ENCODE measurements at regions of chr17 and their contacts with region 1.

Region 1: GRCh38 chr17:9522074-9522473 is 53.5 kb downstream of the STX8 start:
- DNase-seq: peak in 1 of 2 donors; percentile 15
- ATAC-seq: peak in 1 of 2 donors; percentile 62
- H3K4me3 ChIP-seq: no peak overlapping the region
- H3K27ac ChIP-seq: no peak overlapping the region
- H3K4me1 ChIP-seq: peaks cover 0 to 16% of the 10 kb centered on the region in 2 donors
- H3K27me3 ChIP-seq: no peaks in the 10 kb centered on the region
- CTCF ChIP-seq: peak; percentile 28 to 50 (median 36)
- POLR2A ChIP-seq: no peak

Region 2: GRCh38 chr17:8991514-8992285 is 530.4 kb before region 1 on chr17:
- in situ Hi-C with region 1: loop called in 3 of 4 experiments (anchors 10 to 25 kb)
- intact Hi-C with region 1: loop called (anchors 2 kb)
- DNase-seq: peak in 1 of 2 donors; percentile 37
- ATAC-seq: peak in 1 of 2 donors; percentile 53
- H3K4me3 ChIP-seq: no peak overlapping the region
- H3K27ac ChIP-seq: no peak overlapping the region
- H3K4me1 ChIP-seq: no peaks in the 10 kb centered on the region
- H3K27me3 ChIP-seq: no peaks in the 10 kb centered on the region
- CTCF ChIP-seq: peak; percentile 41 to 67 (median 52)
- POLR2A ChIP-seq: no peak

Region 3: GRCh38 chr17:9115446-9116191 is 406.5 kb before region 1 on chr17:
- in situ Hi-C with region 1: loop called in 1 of 4 experiments (anchors 25 kb)
- intact Hi-C with region 1: no loop called
- DNase-seq: peak; percentile 17 to 33
- ATAC-seq: peak; percentile 55 to 85
- H3K4me3 ChIP-seq: peak overlapping the region; percentile 33 to 45 (median 34)
- H3K27ac ChIP-seq: peak overlapping the region; percentile 13 to 43 (median 28)
- H3K4me1 ChIP-seq: peaks cover 0 to 4% of the 10 kb centered on the region in 2 donors
- H3K27me3 ChIP-seq: peaks cover 0 to 5% (median 4%) of the 10 kb centered on the region in 3 donors
- CTCF ChIP-seq: peak in 2 of 5 experiments; percentile 25 to 29
- POLR2A ChIP-seq: no peak

Region 4: GRCh38 chr17:9432134-9432885 is 89.8 kb before region 1 on chr17:
- in situ Hi-C with region 1: no loop called
- intact Hi-C with region 1: loop called (anchors 10 kb)
- DNase-seq: no peak
- ATAC-seq: peak; percentile 32 to 79
- H3K4me3 ChIP-seq: no peak overlapping the region
- H3K27ac ChIP-seq: peak overlapping the region; percentile 34 to 75 (median 51)
- H3K4me1 ChIP-seq: peaks cover 31 to 32% of the 10 kb centered on the region in 2 donors
- H3K27me3 ChIP-seq: no peaks in the 10 kb centered on the region
- CTCF ChIP-seq: no peak
- POLR2A ChIP-seq: no peak